ENCODE measurements at regions of chr20 and their contacts with region 1.

Region 1: DNA sequence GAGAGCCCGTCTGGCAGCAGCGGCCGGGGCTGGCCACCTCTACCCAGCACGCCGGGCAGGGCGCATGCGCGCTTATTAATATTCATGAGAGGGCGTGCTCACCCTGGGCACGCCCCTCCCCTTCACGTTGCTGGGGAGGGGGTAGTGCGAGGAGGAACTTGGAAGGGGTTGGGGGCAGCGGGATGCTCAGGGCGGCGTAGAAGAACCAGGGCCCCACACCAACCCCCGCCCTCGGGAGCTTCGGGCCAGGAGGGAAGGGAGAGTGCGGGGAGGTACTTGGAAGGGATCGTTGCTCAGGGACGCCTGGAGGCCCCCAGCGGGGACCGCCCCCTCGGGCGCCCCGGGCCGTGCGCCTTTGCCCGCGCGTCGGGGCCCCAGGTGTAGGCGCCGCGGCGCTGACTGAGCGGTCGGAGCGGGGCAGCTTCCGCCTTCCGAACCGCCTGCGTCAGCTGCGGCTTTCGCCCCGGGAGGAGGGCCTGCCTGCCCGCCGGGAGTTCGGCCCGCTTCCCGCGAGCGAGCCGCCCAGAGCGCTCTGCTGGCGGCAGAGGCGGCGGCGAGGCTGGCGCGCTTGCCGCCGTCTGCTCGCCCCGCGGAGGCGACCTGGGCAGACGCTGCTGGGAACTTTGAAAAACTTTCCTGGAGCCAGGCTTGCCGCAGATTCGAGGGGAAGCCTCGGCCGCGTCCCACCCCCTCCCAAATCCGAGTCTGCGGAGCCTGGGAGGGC is at the start of gene JAG1:
- DNase-seq: peak; percentile 95
- ATAC-seq: peak; percentile 76
- H3K4me3 ChIP-seq: peak within 1 kb of the TSS; percentile 93
- H3K27ac ChIP-seq: peak within 1 kb of the TSS; percentile 92
- H3K4me1 ChIP-seq: peaks cover 6% of the 10 kb centered on the region
- H3K27me3 ChIP-seq: no peaks in the 10 kb centered on the region
- CTCF ChIP-seq: no peak
- POLR2A ChIP-seq: peak; percentile 74
- RAD21 ChIP-seq: no peak; the same call in 1 of the 2 replicates
- total RNA-seq, gene JAG1: 19.4 and 22.6 TPM in 2 replicates

Region 2: GRCh38 chr20:10469599-10469998 is 204.6 kb before region 1 on chr20:
- CTCF ChIA-PET with region 1: interaction called, 4 read pairs
- POLR2A ChIA-PET with region 1: no interaction called
- dilution Hi-C with region 1: no loop called
- in situ Hi-C with region 1: no loop called
- intact Hi-C with region 1: loop called (anchors 1 kb)
- DNase-seq: peak; percentile 87
- ATAC-seq: peak; percentile 80
- H3K4me3 ChIP-seq: no peak overlapping the region
- H3K27ac ChIP-seq: no peak overlapping the region
- H3K4me1 ChIP-seq: peaks cover 4% of the 10 kb centered on the region
- H3K27me3 ChIP-seq: no peaks in the 10 kb centered on the region
- CTCF ChIP-seq: peak; percentile 68
- POLR2A ChIP-seq: no peak
- RAD21 ChIP-seq: peak; percentile 77

Region 3: DNA sequence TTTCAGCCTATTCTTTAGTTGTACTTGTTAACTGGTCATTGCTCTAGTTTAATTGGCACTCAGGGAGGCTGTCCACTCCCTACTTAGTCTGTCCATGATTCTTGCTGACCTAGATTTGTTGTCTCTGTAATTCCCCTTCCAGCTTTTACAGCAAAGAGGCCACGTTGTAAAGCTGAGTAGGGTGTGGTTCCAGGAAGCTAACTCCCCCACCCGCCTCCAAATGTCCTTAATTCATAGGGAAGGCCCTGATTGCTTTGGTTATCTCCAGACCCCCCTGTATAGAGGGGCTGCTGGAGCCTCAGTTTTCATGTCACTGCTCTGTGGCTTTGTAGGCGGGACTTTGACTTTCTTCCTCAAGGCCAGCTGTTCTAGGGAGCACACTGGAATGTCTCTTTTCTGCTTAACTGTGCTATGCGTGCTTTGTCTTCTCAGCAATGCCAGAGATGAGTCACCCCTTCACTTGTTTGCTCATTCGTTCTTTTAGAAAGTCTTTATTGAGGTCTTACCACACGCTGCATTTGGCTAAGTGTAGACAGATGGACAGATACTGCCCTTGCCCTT is 174.7 kb after region 1 on chr20:
- CTCF ChIA-PET with region 1: no interaction called
- POLR2A ChIA-PET with region 1: no interaction called
- dilution Hi-C with region 1: no loop called
- in situ Hi-C with region 1: no loop called
- intact Hi-C with region 1: loop called (anchors 5 kb)
- DNase-seq: peak; percentile 94
- ATAC-seq: peak; percentile 96
- H3K4me3 ChIP-seq: no peak overlapping the region
- H3K27ac ChIP-seq: peak overlapping the region; percentile 50; the same call in 1 of the 2 replicates
- H3K4me1 ChIP-seq: peaks cover 2% of the 10 kb centered on the region; the same call in 1 of the 2 replicates
- H3K27me3 ChIP-seq: no peaks in the 10 kb centered on the region
- CTCF ChIP-seq: no peak
- POLR2A ChIP-seq: no peak
- RAD21 ChIP-seq: peak; percentile 30

Region 4: DNA sequence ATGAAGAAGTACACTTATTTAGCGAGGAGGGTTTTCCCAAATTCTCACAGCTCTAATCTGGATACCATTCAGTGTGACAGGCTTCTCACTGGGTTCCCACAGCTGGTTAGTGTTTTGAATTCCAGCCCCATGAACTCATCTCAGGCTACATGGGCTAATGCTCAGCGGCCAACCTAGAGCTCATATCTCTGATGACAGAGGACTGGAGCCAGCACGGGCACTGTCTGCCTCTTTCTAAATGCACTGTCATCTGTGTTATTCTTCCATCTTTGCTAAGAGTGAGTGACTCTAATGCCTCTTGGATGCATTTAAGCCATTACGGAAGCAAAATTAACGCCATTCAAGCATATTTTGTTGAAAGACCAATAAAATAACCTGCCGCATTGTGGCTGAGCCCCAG is 308.5 kb after region 1 on chr20:
- CTCF ChIA-PET with region 1: no interaction called
- POLR2A ChIA-PET with region 1: interaction called, 3 read pairs
- dilution Hi-C with region 1: no loop called
- in situ Hi-C with region 1: no loop called
- intact Hi-C with region 1: loop called (anchors 2 kb)
- DNase-seq: peak; percentile 94
- ATAC-seq: peak; percentile 99
- H3K4me3 ChIP-seq: no peak overlapping the region
- H3K27ac ChIP-seq: no peak overlapping the region
- H3K4me1 ChIP-seq: peaks cover 4% of the 10 kb centered on the region
- H3K27me3 ChIP-seq: no peaks in the 10 kb centered on the region
- CTCF ChIP-seq: no peak
- POLR2A ChIP-seq: no peak
- RAD21 ChIP-seq: peak; percentile 27

Region 5: GRCh38 chr20:11159728-11160127 is 485.6 kb after region 1 on chr20:
- CTCF ChIA-PET with region 1: no interaction called
- POLR2A ChIA-PET with region 1: no interaction called
- dilution Hi-C with region 1: no loop called
- in situ Hi-C with region 1: no loop called
- intact Hi-C with region 1: loop called (anchors 5 kb)
- DNase-seq: peak; percentile 91
- ATAC-seq: peak; percentile 99
- H3K4me3 ChIP-seq: no peak overlapping the region
- H3K27ac ChIP-seq: no peak overlapping the region
- H3K4me1 ChIP-seq: peaks cover 3% of the 10 kb centered on the region
- H3K27me3 ChIP-seq: no peaks in the 10 kb centered on the region
- CTCF ChIP-seq: no peak
- POLR2A ChIP-seq: no peak
- RAD21 ChIP-seq: no peak

Region 6: DNA sequence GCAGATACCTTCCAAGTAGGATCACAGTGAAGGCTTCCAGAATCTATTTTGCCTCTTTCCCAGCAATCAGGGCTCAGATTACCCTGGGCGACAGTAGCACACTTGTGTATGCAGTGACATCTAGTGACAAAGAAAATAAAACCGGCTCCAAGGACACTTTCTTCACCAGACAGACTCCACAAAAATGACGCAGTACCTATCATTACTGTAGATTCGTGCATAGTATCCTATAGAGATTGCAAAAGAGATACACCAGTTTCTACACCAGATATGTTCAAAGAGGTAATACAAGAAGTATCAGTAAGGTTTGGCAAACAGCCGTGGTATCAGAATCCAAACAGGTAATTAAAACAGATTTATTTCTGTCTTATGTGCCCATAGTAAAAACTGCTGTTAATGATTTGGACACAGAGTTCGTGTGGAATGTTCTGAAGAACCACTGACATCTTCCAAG is 600.0 kb after region 1 on chr20:
- CTCF ChIA-PET with region 1: interaction called, 3 read pairs
- POLR2A ChIA-PET with region 1: no interaction called
- dilution Hi-C with region 1: no loop called
- in situ Hi-C with region 1: loop called (anchors 10 kb)
- intact Hi-C with region 1: loop called (anchors 1 kb)
- DNase-seq: peak; percentile 79
- ATAC-seq: peak; percentile 94
- H3K4me3 ChIP-seq: no peak overlapping the region
- H3K27ac ChIP-seq: no peak overlapping the region
- H3K4me1 ChIP-seq: no peaks in the 10 kb centered on the region
- H3K27me3 ChIP-seq: no peaks in the 10 kb centered on the region
- CTCF ChIP-seq: peak; percentile 78
- POLR2A ChIP-seq: no peak
- RAD21 ChIP-seq: peak; percentile 90

Region 7: GRCh38 chr20:11544029-11544678 is 870.0 kb after region 1 on chr20:
- CTCF ChIA-PET with region 1: no interaction called
- POLR2A ChIA-PET with region 1: no interaction called
- dilution Hi-C with region 1: loop called (anchors 25 kb)
- in situ Hi-C with region 1: loop called (anchors 10 kb)
- intact Hi-C with region 1: loop called (anchors 1 kb)
- DNase-seq: peak; percentile 75
- ATAC-seq: peak; percentile 82
- H3K4me3 ChIP-seq: no peak overlapping the region; the same call in 1 of the 2 replicates
- H3K27ac ChIP-seq: no peak overlapping the region
- H3K4me1 ChIP-seq: no peaks in the 10 kb centered on the region; the same call in none of the 2 replicates
- H3K27me3 ChIP-seq: peaks cover 4% of the 10 kb centered on the region; the same call in 1 of the 2 replicates
- CTCF ChIP-seq: peak; percentile 71
- POLR2A ChIP-seq: no peak
- RAD21 ChIP-seq: peak; percentile 87

Measured in IMR-90 (cell line).